GM12878 (cell line): ENCODE measurements at regions of chr1 and their contacts with region 1.

Region 1: DNA sequence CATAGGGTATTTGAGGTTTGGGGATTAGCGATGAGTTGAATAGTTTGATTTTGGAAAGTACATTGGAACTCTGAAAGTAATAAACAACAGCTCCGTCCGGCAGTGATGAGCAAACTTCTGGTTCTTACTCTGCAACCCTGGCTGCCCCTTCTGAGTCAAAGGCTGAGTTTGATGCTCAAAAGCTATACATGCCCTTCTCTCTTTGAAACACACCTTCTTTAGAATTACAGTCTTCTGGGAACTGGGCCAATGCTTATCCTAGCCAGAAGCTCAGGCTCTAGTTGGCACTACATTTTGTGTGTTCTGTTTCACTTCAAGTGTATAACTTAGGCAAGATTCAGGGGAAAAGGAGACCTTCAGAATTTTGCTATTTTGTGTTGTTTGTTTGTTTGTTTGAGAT is 9.3 kb downstream of the AHCYL1 start:
- DNase-seq: no peak
- ATAC-seq: no peak
- H3K4me3 ChIP-seq: no peak overlapping the region
- H3K27ac ChIP-seq: no peak overlapping the region
- H3K4me1 ChIP-seq: no peaks in the 10 kb centered on the region
- H3K27me3 ChIP-seq: no peaks in the 10 kb centered on the region
- CTCF ChIP-seq: no peak
- EP300 ChIP-seq: no peak
- POLR2A ChIP-seq: no peak
- RAD21 ChIP-seq: no peak

Region 2: GRCh38 chr1:109969146-109969829 is 24.6 kb before region 1 on chr1:
- CTCF ChIA-PET with region 1: no interaction called
- POLR2A ChIA-PET with region 1: no interaction called
- RAD21 ChIA-PET with region 1: no interaction called
- SMC1A ChIA-PET with region 1: no interaction called
- in situ Hi-C with region 1: no loop called
- intact Hi-C with region 1: no loop called
- DNase-seq: no peak
- ATAC-seq: peak; percentile 79
- H3K4me3 ChIP-seq: no peak overlapping the region
- H3K27ac ChIP-seq: no peak overlapping the region
- H3K4me1 ChIP-seq: no peaks in the 10 kb centered on the region
- H3K27me3 ChIP-seq: no peaks in the 10 kb centered on the region
- CTCF ChIP-seq: no peak
- EP300 ChIP-seq: no peak
- POLR2A ChIP-seq: no peak
- RAD21 ChIP-seq: no peak

Region 3: DNA sequence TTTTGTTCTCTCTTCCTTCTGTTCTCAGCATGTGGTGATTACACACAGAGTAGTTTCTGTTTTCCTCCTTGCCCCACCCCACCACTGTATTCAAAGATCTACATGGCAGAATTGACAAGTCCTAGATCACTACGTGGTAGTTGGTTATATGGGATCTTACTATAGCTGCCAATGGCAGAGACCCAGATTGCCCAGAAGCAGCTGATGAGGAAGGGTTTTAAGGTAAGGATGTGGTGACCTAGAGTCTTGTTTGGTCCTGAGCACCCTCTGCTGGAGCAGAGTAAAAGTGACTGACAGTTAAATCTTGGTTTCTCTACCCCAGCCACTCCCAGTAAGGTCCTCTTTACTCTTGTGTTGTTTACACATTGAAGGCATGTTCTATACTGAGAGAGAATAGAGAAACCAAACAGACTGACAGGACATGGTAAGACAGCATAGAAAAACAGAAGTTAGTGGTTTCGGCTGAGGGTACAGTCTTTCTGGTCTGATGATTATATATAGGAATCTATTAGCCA is 17.7 kb after region 1 on chr1:
- CTCF ChIA-PET with region 1: interaction called, 200 read pairs
- POLR2A ChIA-PET with region 1: interaction called, 4 read pairs
- RAD21 ChIA-PET with region 1: interaction called, 94 read pairs
- SMC1A ChIA-PET with region 1: interaction called, 113 read pairs
- in situ Hi-C with region 1: no loop called
- intact Hi-C with region 1: no loop called
- DNase-seq: peak; percentile 84
- ATAC-seq: peak; percentile 99
- H3K4me3 ChIP-seq: no peak overlapping the region
- H3K27ac ChIP-seq: peak overlapping the region; percentile 34
- H3K4me1 ChIP-seq: peaks cover 27% of the 10 kb centered on the region
- H3K27me3 ChIP-seq: no peaks in the 10 kb centered on the region
- CTCF ChIP-seq: peak; percentile 68 to 89 (median 74)
- EP300 ChIP-seq: no peak
- POLR2A ChIP-seq: no peak
- RAD21 ChIP-seq: peak; percentile 75